Tibial artery (tissue), 4 donors: ENCODE measurements at regions of chr11 and their contacts with region 1.

Region 1: DNA sequence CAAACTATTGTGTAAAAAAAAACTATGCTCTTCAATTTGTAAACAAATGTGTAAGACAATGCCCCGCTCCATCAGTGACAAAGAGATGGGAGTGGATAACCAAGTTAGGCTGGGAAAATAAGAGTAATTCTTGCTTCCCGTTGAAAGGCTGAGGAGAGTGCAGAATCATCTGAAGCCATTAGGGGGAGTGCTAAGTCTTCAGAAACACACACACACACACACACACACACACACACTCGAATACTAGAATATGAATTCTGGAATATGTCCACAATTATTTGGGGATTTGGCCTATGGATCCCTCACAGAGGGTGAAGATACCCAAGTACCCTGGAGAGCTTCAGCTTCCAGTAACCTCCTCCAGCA is 27.8 kb upstream of the ROBO3 start:
- DNase-seq: no peak
- H3K4me3 ChIP-seq: no peak overlapping the region
- H3K27ac ChIP-seq: no peak overlapping the region
- H3K4me1 ChIP-seq: peaks cover 0 to 20% (median 14%) of the 10 kb centered on the region in 4 donors
- H3K27me3 ChIP-seq: peaks cover 0 to 45% of the 10 kb centered on the region in 2 donors
- CTCF ChIP-seq: no peak

Region 2: DNA sequence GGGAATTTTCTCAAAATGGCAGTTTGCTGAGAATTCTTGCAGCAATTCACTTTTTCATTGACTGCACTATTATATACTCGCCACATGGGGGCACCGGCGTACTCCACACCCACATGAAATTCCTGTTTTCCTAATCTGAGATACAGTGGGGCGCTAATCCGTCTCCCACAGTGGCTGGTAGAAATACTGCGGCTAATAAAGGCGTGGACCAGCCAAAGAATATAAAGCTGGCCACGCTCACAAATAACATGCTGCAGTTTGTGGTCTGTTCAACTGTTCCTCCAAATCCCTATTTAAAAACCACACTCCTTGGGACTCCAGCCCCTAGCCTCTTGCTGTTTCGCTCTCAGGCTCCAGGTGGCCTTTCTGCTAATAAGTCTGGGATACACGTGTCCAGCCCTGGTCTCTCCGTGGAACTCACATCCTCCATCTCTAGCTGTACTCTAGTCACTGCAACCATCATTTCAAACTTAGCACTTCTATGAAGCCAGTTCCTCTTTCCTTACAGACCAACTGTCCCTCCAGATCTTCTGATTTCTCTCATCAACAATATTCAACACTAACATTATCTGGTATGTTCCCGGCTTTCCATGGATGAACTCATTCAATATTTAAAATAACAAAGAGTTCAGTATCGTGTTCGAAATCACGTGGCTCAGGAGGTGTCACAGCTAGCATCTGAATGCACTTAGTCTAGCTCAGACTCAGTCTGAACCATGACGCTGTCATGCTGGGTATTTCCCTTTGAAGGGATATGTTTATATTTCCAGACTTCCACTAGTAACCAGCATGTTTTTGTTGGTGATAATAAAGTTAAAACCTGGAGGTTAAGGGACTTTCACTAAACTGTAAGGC is 192.8 kb before region 1 on chr11:
- intact Hi-C with region 1: loop called (anchors 5 kb)
- DNase-seq: peak; percentile 36 to 77
- H3K4me3 ChIP-seq: peak overlapping the region; percentile 24 to 38
- H3K27ac ChIP-seq: peak overlapping the region; percentile 55 to 58
- H3K4me1 ChIP-seq: peaks cover 0 to 22% (median 6%) of the 10 kb centered on the region in 4 donors
- H3K27me3 ChIP-seq: no peaks in the 10 kb centered on the region
- CTCF ChIP-seq: peak; percentile 73 to 78

Region 3: DNA sequence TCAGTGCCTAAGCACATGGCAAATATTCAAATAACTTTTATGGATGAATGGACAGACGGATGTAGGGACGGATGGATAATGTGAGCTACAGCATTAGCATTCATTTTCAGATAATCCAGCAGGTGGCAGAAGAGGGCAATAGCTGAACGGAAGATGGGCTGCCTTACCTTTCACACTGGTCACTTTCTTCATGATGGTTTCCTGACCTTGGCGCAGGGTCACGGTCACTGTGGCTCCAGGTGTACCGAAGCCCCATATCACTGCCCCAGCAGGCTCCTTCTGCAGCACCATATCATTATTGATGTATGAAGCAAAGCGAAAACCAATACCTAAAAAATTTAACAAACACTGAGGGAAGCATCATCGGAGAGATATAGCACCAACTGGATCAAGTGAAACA is 168.3 kb before region 1 on chr11:
- intact Hi-C with region 1: loop called (anchors 10 kb)
- DNase-seq: peak in 1 of 2 donors; percentile 25
- H3K4me3 ChIP-seq: no peak overlapping the region
- H3K27ac ChIP-seq: no peak overlapping the region
- H3K4me1 ChIP-seq: peaks cover 0 to 11% (median 10%) of the 10 kb centered on the region in 4 donors
- H3K27me3 ChIP-seq: no peaks in the 10 kb centered on the region
- CTCF ChIP-seq: peak; percentile 76 to 86

Region 4: GRCh38 chr11:124758317-124759203 is 78.9 kb before region 1 on chr11:
- intact Hi-C with region 1: loop called (anchors 2 kb)
- DNase-seq: peak; percentile 81 to 90
- H3K4me3 ChIP-seq: peak overlapping the region; percentile 77 to 94
- H3K27ac ChIP-seq: peak overlapping the region; percentile 95 to 98
- H3K4me1 ChIP-seq: peaks cover 0 to 59% (median 38%) of the 10 kb centered on the region in 4 donors
- H3K27me3 ChIP-seq: no peaks in the 10 kb centered on the region
- CTCF ChIP-seq: peak; percentile 83 to 87

Region 5: DNA sequence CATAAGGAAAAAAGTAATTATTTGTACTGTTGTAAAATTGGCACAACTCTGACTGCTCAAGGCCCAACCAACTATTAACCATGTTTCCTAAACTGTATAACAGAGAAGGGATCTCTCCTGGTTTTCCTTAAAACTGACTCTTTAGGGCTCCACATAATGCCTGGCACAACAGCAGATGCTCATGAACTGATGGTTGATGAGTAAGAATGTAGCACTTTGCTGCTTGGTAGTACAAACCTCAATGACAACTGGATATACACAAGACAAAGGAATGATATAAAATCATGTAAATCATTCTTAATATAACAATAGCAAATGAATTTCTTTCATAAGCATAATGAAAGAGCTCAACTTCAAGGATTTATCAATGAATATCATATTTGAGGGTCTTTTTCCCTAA is 49.0 kb before region 1 on chr11:
- intact Hi-C with region 1: no loop called
- DNase-seq: no peak
- H3K4me3 ChIP-seq: no peak overlapping the region
- H3K27ac ChIP-seq: no peak overlapping the region
- H3K4me1 ChIP-seq: peaks cover 0 to 15% (median 6%) of the 10 kb centered on the region in 4 donors
- H3K27me3 ChIP-seq: no peaks in the 10 kb centered on the region
- CTCF ChIP-seq: no peak

Region 6: DNA sequence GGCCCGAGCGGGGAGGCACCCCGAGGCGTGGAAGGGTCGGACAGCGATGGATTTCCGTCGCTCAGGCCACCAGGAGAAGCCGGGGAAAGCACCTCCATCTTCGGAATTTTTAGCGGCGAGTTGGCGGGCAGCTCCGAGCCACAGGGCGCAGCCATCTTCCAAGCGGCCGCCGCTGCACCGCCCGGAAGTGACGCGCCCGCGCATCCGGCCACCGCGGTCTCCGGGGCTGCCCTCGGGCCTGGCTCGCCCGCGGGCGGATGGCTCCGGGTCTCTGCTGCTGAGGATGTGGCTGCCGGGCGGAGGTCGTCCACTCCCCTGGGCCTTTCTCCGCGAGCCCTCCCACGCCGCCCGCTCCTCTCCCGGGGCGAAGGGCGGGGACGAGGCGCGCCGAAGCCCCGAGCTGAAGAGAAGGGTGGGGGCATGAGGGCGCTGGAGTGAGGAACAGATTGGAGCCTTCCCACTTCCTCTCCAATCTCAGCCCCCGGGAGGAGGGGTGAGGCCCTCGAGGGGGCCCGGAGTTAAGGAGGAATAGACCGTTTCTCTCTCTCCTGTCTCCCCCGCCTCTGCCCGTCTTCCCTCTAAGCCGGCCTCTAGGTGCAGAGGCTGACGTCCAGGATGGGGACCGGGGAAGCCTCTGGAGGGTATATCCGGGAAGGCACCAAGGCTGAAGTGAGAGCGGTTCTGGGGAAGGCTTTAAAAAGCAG is 37.1 kb before region 1 on chr11 and contains the start of gene MSANTD2:
- intact Hi-C with region 1: loop called (anchors 5 kb)
- DNase-seq: peak; percentile 79 to 88
- H3K4me3 ChIP-seq: peak within 1 kb of the TSS; percentile 98 to 100
- H3K27ac ChIP-seq: peak within 1 kb of the TSS; percentile 99
- H3K4me1 ChIP-seq: peaks cover 0 to 37% (median 21%) of the 10 kb centered on the region in 4 donors
- H3K27me3 ChIP-seq: no peaks in the 10 kb centered on the region
- CTCF ChIP-seq: no peak

Region 7: GRCh38 chr11:124865921-124866583 is 28.6 kb after region 1 on chr11:
- intact Hi-C with region 1: loop called (anchors 2 kb)
- DNase-seq: no peak
- H3K4me3 ChIP-seq: peak overlapping the region; percentile 9 to 44
- H3K27ac ChIP-seq: no peak overlapping the region
- H3K4me1 ChIP-seq: peaks cover 0 to 56% (median 43%) of the 10 kb centered on the region in 4 donors
- H3K27me3 ChIP-seq: peaks cover 16 to 94% of the 10 kb centered on the region in 2 donors
- CTCF ChIP-seq: peak; percentile 62 to 82